Activated B cell treated with CpG ODN at 0.5 μM for 24 hours (primary cell): ENCODE measurements at regions of chr10 and their contacts with region 1.

Region 1: DNA sequence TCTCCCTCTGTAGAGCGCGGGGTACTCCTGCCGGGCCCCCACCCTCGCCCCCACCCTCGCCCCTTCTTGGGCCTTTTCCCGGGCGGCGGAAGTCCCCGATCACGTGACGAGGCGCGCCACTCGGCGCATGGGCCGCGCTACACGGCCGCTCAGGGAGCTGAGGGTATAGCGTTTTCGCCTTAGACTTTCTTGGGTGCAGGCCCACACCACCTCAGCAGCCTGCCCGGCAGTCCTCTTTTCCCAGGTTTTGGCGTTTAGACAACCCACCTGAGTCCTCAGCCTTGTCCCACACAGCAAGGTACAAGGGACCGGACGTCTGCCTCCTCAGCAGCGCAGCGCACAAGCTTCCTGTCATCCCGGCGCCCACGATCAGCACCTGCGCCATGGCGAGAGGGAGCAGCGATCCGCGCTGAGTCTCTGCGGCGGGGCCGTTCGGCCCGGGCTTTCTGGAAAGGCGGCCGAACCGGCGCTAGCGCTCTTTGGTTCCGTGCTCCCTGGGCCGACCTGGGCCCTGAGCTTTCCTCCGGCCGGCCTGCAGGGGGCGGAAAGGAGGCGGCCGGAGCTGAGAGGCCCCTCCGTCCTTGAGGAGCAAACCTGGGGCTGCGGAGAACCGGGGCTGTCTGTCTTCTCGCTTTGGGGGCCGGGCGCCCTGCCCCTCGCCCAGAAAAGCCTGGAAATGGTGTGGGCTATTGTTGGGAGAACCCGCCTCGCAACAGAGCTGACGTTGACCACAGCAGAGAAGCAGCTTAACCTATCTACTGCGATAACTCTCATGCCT is at the start of gene RNLS:
- DNase-seq: peak; percentile 72
- ATAC-seq: peak; percentile 88
- H3K4me3 Mint-ChIP-seq: peak within 1 kb of the TSS; percentile 92
- H3K27ac Mint-ChIP-seq: peak within 1 kb of the TSS; percentile 95
- H3K4me1 Mint-ChIP-seq: peaks cover 17% of the 10 kb centered on the region
- H3K27me3 Mint-ChIP-seq: no peaks in the 10 kb centered on the region
- CTCF ChIP-seq: no peak
- total RNA-seq, gene RNLS: 4.9 and 5.7 TPM in 2 replicates

Region 2: GRCh38 chr10:88080213-88080612 is 502.8 kb before region 1 on chr10:
- CTCF ChIA-PET with region 1: no interaction called
- POLR2A ChIA-PET with region 1: interaction called, 14 read pairs
- intact Hi-C with region 1: no loop called
- DNase-seq: no peak
- ATAC-seq: no peak
- H3K4me3 Mint-ChIP-seq: peak overlapping the region; percentile 48
- H3K27ac Mint-ChIP-seq: peak overlapping the region; percentile 54
- H3K4me1 Mint-ChIP-seq: peaks cover 62% of the 10 kb centered on the region
- H3K27me3 Mint-ChIP-seq: no peaks in the 10 kb centered on the region
- CTCF ChIP-seq: no peak

Region 3: GRCh38 chr10:88243836-88244730 is 338.9 kb before region 1 on chr10:
- CTCF ChIA-PET with region 1: no interaction called
- POLR2A ChIA-PET with region 1: no interaction called
- intact Hi-C with region 1: no loop called
- DNase-seq: no peak
- ATAC-seq: no peak
- H3K4me3 Mint-ChIP-seq: no peak overlapping the region
- H3K27ac Mint-ChIP-seq: no peak overlapping the region
- H3K4me1 Mint-ChIP-seq: peaks cover 17% of the 10 kb centered on the region
- H3K27me3 Mint-ChIP-seq: no peaks in the 10 kb centered on the region
- CTCF ChIP-seq: no peak

Region 4: DNA sequence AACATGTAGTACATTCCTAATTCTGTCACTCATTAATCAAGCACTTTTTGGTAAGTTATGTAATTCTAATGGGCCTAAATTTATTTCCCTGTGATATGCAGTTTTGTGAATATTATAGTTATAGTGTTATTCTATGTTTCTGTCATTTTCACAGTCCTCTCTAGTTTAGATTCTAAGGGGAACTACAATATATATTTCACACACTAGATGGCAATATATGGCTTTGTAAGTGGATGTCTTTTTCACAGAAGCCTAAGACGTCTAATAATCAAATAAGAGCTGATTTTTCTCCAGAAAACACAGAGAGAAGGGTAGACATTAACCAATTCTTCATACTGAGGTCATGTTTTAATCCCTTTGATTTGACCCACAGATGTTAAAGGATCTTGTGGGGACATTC is 17.9 kb before region 1 on chr10:
- CTCF ChIA-PET with region 1: interaction called, 16 read pairs
- POLR2A ChIA-PET with region 1: interaction called, 3 read pairs
- intact Hi-C with region 1: no loop called
- DNase-seq: no peak
- ATAC-seq: peak; percentile 28
- H3K4me3 Mint-ChIP-seq: no peak overlapping the region
- H3K27ac Mint-ChIP-seq: no peak overlapping the region
- H3K4me1 Mint-ChIP-seq: peaks cover 4% of the 10 kb centered on the region
- H3K27me3 Mint-ChIP-seq: no peaks in the 10 kb centered on the region
- CTCF ChIP-seq: no peak

Region 5: GRCh38 chr10:88598055-88598454 is 15.1 kb after region 1 on chr10:
- CTCF ChIA-PET with region 1: interaction called, 7 read pairs
- POLR2A ChIA-PET with region 1: interaction called, 3 read pairs
- intact Hi-C with region 1: loop called (anchors 1 kb)
- DNase-seq: no peak
- ATAC-seq: peak; percentile 81
- H3K4me3 Mint-ChIP-seq: no peak overlapping the region
- H3K27ac Mint-ChIP-seq: peak overlapping the region; percentile 39
- H3K4me1 Mint-ChIP-seq: peaks cover 9% of the 10 kb centered on the region
- H3K27me3 Mint-ChIP-seq: no peaks in the 10 kb centered on the region
- CTCF ChIP-seq: no peak

Region 6: DNA sequence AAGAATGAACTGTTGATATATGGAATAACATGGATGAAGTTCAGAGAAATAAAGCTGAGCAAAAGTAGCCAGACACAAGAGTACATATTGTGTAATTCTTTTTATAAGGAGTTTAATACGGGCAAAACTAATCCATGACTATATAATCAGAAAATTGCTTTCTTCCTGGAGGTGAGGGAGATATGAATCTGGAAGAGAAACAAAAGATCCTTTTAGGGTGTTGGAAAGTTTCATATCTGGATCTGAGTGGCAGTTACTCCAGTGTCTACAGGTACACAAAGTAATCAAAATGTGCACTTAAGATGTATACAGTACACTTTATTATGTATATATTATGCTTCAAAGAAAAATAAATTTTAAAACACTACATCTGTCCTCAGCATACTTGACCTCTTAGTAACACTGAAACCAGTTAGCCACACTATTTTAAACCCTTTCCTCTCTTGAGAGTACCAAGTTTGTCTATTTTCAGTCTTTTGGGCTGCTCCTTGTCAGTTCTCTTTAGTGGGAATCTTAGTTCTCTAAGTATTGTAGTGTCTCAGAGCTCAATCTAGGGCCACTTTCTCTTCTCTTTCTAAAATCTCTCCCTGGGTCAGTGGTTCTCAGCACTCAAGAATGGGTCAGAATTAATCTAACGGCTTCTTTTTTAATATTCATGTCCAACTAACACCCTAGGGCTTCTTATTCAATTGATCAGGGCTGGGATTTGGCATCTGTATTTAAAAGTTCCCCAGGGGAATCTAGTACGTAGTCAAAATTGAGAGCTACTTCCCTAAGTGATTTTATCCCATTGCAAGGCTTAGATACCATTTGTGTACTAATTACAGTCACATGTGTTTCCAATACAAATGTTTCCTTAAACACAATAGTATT is 77.0 kb after region 1 on chr10:
- CTCF ChIA-PET with region 1: no interaction called
- POLR2A ChIA-PET with region 1: no interaction called
- intact Hi-C with region 1: no loop called
- DNase-seq: no peak
- ATAC-seq: no peak
- H3K4me3 Mint-ChIP-seq: no peak overlapping the region
- H3K27ac Mint-ChIP-seq: no peak overlapping the region
- H3K4me1 Mint-ChIP-seq: no peaks in the 10 kb centered on the region
- H3K27me3 Mint-ChIP-seq: peaks cover 6% of the 10 kb centered on the region
- CTCF ChIP-seq: no peak

Region 7: GRCh38 chr10:88810196-88810961 is 227.4 kb after region 1 on chr10:
- CTCF ChIA-PET with region 1: interaction called, 8 read pairs
- POLR2A ChIA-PET with region 1: no interaction called
- intact Hi-C with region 1: loop called (anchors 5 kb)
- DNase-seq: no peak
- ATAC-seq: peak; percentile 50
- H3K4me3 Mint-ChIP-seq: no peak overlapping the region
- H3K27ac Mint-ChIP-seq: no peak overlapping the region
- H3K4me1 Mint-ChIP-seq: peaks cover 5% of the 10 kb centered on the region
- H3K27me3 Mint-ChIP-seq: no peaks in the 10 kb centered on the region
- CTCF ChIP-seq: no peak